Naive thymus-derived CD4-positive, alpha-beta T cell (primary cell): ENCODE measurements at regions of chr9 and their contacts with region 1.

Region 1: DNA sequence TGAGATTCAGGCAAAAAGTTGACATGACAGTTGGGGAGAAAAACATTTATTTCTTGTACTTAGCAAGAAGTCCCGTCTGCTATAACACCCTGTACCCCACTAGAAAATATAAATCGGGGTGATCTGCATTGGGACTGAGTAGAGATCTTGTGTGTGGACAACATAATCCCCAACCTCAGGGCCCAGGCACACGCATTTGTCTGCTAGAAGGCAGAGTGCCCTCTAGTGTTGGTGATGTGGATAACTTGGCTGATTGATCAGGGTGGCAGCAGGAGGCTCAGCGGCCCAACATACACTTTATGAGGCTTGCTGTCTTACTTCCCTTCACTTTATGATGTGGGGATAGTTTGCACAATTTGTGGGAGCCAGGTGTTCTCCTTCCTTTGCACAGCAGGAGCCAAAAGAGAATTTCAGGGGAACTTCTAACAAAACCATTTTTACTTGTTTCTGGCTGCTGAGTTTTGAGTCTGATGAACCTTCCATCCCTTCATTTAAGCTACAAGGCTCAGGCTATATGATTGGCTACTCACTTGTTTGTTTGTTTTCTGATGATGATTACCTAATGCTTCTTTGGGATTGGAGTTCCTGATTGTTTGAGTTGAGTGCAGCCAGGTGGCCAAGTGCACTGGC is 263.2 kb downstream of the DMAC1 start:
- DNase-seq: peak in 5 of 9 donors; percentile 3 to 38 (median 11)
- ATAC-seq: peak; percentile 53
- H3K4me3 ChIP-seq: no peak overlapping the region
- H3K4me3 Mint-ChIP-seq: no peak overlapping the region
- H3K27ac ChIP-seq: no peak overlapping the region
- H3K27ac Mint-ChIP-seq: peak overlapping the region in 1 of 9 donors; percentile 5
- H3K4me1 ChIP-seq: no peaks in the 10 kb centered on the region
- H3K4me1 Mint-ChIP-seq: peaks cover 0 to 36% (median 0%) of the 10 kb centered on the region in 7 donors
- H3K27me3 ChIP-seq: no peaks in the 10 kb centered on the region
- H3K27me3 Mint-ChIP-seq: peaks cover 7 to 27% (median 21%) of the 10 kb centered on the region in 5 donors

Region 2: DNA sequence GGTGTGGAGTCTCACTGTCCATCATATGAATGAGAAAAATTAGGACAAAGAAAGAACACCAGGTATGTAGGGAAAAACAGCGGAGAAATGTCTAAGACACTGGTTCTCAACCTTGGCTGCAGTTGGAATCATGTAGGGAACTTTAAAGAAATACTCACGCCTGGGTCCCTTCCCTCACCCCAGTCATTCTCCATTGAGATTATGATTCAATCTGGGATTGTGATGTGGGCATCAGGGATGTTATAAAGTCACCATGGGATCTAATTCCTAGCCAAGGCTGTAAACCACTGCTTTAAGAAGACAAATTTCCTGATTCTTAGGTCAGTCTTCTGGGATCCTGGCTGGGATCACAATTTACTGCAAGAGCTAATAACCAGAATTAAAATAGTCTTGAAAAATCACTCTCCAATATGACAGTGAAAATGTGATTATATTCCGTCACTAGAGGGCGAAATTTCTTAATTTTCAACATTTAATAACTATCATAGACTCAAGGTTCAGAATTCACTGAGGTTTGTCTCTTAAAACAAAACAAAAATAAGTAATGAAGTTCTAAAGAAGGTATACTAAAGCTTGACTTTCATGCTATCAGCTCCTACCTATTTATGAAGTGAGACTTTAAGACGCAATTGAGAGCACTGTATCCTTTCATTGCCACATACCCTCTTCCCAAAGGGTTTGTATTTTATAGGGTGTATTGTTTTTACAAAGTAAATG is 951.4 kb before region 1 on chr9:
- CTCF ChIA-PET with region 1: no interaction called
- POLR2A ChIA-PET with region 1: no interaction called
- intact Hi-C with region 1: loop called in 1 of 2 experiments (anchors 2 kb)
- DNase-seq: peak in 6 of 9 donors; percentile 2 to 35 (median 26)
- ATAC-seq: no peak
- H3K4me3 ChIP-seq: no peak overlapping the region
- H3K4me3 Mint-ChIP-seq: no peak overlapping the region
- H3K27ac ChIP-seq: no peak overlapping the region
- H3K27ac Mint-ChIP-seq: no peak overlapping the region
- H3K4me1 ChIP-seq: no peaks in the 10 kb centered on the region
- H3K4me1 Mint-ChIP-seq: peaks cover 0 to 3% (median 0%) of the 10 kb centered on the region in 7 donors
- H3K27me3 ChIP-seq: no peaks in the 10 kb centered on the region
- H3K27me3 Mint-ChIP-seq: peaks cover 0 to 11% (median under 1%) of the 10 kb centered on the region in 5 donors

Region 3: GRCh38 chr9:6827439-6827838 is 709.0 kb before region 1 on chr9:
- CTCF ChIA-PET with region 1: no interaction called
- POLR2A ChIA-PET with region 1: no interaction called
- intact Hi-C with region 1: loop called (anchors 1 to 5 kb)
- DNase-seq: peak in 8 of 9 donors; percentile 2 to 48 (median 38)
- ATAC-seq: peak; percentile 54
- H3K4me3 ChIP-seq: no peak overlapping the region
- H3K4me3 Mint-ChIP-seq: no peak overlapping the region
- H3K27ac ChIP-seq: no peak overlapping the region
- H3K27ac Mint-ChIP-seq: peak overlapping the region in 3 of 9 donors; percentile 5 to 53 (median 35)
- H3K4me1 ChIP-seq: no peaks in the 10 kb centered on the region
- H3K4me1 Mint-ChIP-seq: peaks cover 1 to 23% (median 8%) of the 10 kb centered on the region in 7 donors
- H3K27me3 ChIP-seq: no peaks in the 10 kb centered on the region
- H3K27me3 Mint-ChIP-seq: no peaks in the 10 kb centered on the region

Region 4: GRCh38 chr9:6910032-6910431 is 626.4 kb before region 1 on chr9:
- CTCF ChIA-PET with region 1: no interaction called
- POLR2A ChIA-PET with region 1: no interaction called
- intact Hi-C with region 1: loop called in 1 of 2 experiments (anchors 10 kb)
- DNase-seq: no peak
- ATAC-seq: no peak
- H3K4me3 ChIP-seq: no peak overlapping the region
- H3K4me3 Mint-ChIP-seq: no peak overlapping the region
- H3K27ac ChIP-seq: no peak overlapping the region
- H3K27ac Mint-ChIP-seq: no peak overlapping the region
- H3K4me1 ChIP-seq: no peaks in the 10 kb centered on the region
- H3K4me1 Mint-ChIP-seq: peaks cover 6 to 52% (median 30%) of the 10 kb centered on the region in 7 donors
- H3K27me3 ChIP-seq: no peaks in the 10 kb centered on the region
- H3K27me3 Mint-ChIP-seq: no peaks in the 10 kb centered on the region

Region 5: DNA sequence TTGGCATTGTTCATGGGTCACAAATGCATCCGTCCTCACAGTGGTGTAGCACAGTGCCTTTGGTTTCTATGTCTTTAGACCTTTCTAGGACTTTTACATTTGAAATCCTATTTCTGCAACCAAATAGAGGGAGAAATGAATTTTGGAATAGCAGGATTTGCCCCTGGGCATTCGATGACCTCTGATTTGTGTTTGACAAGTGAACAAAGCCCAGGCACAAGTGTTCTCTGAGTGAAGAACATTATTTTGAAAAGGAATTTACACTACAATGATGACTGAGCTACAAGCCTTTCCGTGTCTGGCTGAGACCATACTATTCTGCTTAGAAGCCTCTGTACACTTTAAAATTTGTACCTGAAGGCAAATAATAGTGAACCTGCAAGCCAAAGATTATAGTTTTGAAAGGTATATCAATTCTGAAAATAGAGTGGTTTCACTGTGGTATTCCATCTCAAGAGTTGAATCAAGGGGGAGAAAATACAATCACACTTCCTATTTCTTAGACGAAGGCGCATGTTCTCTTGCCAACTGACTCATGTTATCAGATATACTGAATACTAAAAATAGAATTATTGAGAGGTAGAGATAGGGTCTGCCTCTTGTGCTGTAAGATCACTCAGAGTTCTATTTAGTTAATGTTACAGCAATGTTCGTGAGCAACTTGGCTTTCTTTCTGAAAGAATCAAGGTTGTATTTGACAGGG is 481.1 kb before region 1 on chr9:
- CTCF ChIA-PET with region 1: no interaction called
- POLR2A ChIA-PET with region 1: no interaction called
- intact Hi-C with region 1: loop called in 1 of 2 experiments (anchors 1 kb)
- DNase-seq: no peak
- ATAC-seq: no peak
- H3K4me3 ChIP-seq: no peak overlapping the region
- H3K4me3 Mint-ChIP-seq: no peak overlapping the region
- H3K27ac ChIP-seq: no peak overlapping the region
- H3K27ac Mint-ChIP-seq: peak overlapping the region in 1 of 9 donors; percentile 30
- H3K4me1 ChIP-seq: no peaks in the 10 kb centered on the region
- H3K4me1 Mint-ChIP-seq: peaks cover 0 to 7% (median 5%) of the 10 kb centered on the region in 7 donors
- H3K27me3 ChIP-seq: no peaks in the 10 kb centered on the region
- H3K27me3 Mint-ChIP-seq: no peaks in the 10 kb centered on the region

Region 6: GRCh38 chr9:7405924-7406604 is 130.4 kb before region 1 on chr9:
- CTCF ChIA-PET with region 1: no interaction called
- POLR2A ChIA-PET with region 1: no interaction called
- intact Hi-C with region 1: loop called in 1 of 2 experiments (anchors 2 kb)
- DNase-seq: no peak
- ATAC-seq: no peak
- H3K4me3 ChIP-seq: no peak overlapping the region
- H3K4me3 Mint-ChIP-seq: no peak overlapping the region
- H3K27ac ChIP-seq: no peak overlapping the region
- H3K27ac Mint-ChIP-seq: peak overlapping the region in 1 of 9 donors; percentile 4
- H3K4me1 ChIP-seq: no peaks in the 10 kb centered on the region
- H3K4me1 Mint-ChIP-seq: peaks cover 0 to 11% (median 0%) of the 10 kb centered on the region in 7 donors
- H3K27me3 ChIP-seq: no peaks in the 10 kb centered on the region
- H3K27me3 Mint-ChIP-seq: peaks cover 14 to 25% (median 17%) of the 10 kb centered on the region in 5 donors

Region 7: GRCh38 chr9:7439355-7439995 is 97.0 kb before region 1 on chr9:
- CTCF ChIA-PET with region 1: no interaction called
- POLR2A ChIA-PET with region 1: no interaction called
- intact Hi-C with region 1: no loop called
- DNase-seq: no peak
- ATAC-seq: no peak
- H3K4me3 ChIP-seq: no peak overlapping the region
- H3K4me3 Mint-ChIP-seq: no peak overlapping the region
- H3K27ac ChIP-seq: no peak overlapping the region
- H3K27ac Mint-ChIP-seq: no peak overlapping the region
- H3K4me1 ChIP-seq: no peaks in the 10 kb centered on the region
- H3K4me1 Mint-ChIP-seq: no peaks in the 10 kb centered on the region
- H3K27me3 ChIP-seq: no peaks in the 10 kb centered on the region
- H3K27me3 Mint-ChIP-seq: peaks cover 0 to 6% (median 3%) of the 10 kb centered on the region in 5 donors

Region 8: DNA sequence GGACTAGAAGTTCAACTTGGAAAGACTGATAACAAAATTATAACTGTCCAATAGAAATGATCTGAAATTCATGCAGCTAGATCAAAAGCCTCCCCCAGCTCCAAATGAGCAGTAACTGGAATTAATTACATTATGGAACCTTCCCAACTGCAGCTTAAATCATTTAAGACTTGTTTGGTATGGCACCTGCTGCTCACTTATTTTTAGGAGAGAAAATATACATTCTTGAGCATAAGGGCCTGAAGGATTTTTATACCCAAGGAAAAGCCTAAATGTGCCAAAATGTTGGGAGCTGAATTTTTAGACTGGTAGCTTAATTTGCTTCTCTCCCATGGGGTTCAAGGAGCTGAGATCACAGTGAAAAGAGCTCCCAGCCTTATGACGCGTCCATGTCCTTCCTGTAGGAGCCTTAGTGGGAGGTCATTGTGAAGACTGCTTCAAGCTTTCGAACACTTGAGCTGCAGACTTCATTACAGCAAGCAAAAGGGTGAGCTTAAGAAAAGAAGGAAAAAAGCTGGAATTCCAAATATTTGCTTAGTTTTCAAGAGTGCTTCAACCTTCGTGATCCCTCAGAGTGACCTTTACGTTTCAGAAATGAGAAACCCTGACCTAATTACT is 12.9 kb before region 1 on chr9:
- CTCF ChIA-PET with region 1: no interaction called
- POLR2A ChIA-PET with region 1: no interaction called
- intact Hi-C with region 1: loop called in 1 of 2 experiments (anchors 1 kb)
- DNase-seq: no peak
- ATAC-seq: no peak
- H3K4me3 ChIP-seq: no peak overlapping the region
- H3K4me3 Mint-ChIP-seq: no peak overlapping the region
- H3K27ac ChIP-seq: no peak overlapping the region
- H3K27ac Mint-ChIP-seq: no peak overlapping the region
- H3K4me1 ChIP-seq: no peaks in the 10 kb centered on the region
- H3K4me1 Mint-ChIP-seq: no peaks in the 10 kb centered on the region
- H3K27me3 ChIP-seq: no peaks in the 10 kb centered on the region
- H3K27me3 Mint-ChIP-seq: peaks cover 3 to 46% (median 14%) of the 10 kb centered on the region in 5 donors